SK-N-SH (cell line): ENCODE measurements at regions of chr2 and their contacts with region 1.

Region 1: GRCh38 chr2:23404426-23404825 is 19.4 kb downstream of the KLHL29 start:
- DNase-seq: peak; percentile 84
- H3K4me3 ChIP-seq: peak overlapping the region; percentile 19 to 30
- H3K27ac ChIP-seq: peak overlapping the region; percentile 67 to 87
- H3K4me1 ChIP-seq: peaks cover 15 to 23% of the 10 kb centered on the region in 2 experiments; a peak in 3 of 4 replicates
- H3K27me3 ChIP-seq: no peaks in the 10 kb centered on the region
- CTCF ChIP-seq: peak; percentile 63
- EP300 ChIP-seq: peak in 1 of 2 experiments; percentile 62; a peak in 1 of 4 replicates
- RAD21 ChIP-seq: peak; percentile 92

Region 2: GRCh38 chr2:23452853-23453420 is 48.5 kb after region 1 on chr2:
- CTCF ChIA-PET with region 1: interaction called, 20 read pairs
- POLR2A ChIA-PET with region 1: no interaction called
- DNase-seq: no peak
- H3K4me3 ChIP-seq: no peak overlapping the region
- H3K27ac ChIP-seq: no peak overlapping the region
- H3K4me1 ChIP-seq: peaks cover 11 to 38% of the 10 kb centered on the region in 2 experiments; a peak in 3 of 4 replicates
- H3K27me3 ChIP-seq: no peaks in the 10 kb centered on the region
- CTCF ChIP-seq: no peak
- EP300 ChIP-seq: no peak
- RAD21 ChIP-seq: no peak

Region 3: GRCh38 chr2:23465936-23466335 is 61.5 kb after region 1 on chr2:
- CTCF ChIA-PET with region 1: interaction called, 20 read pairs
- POLR2A ChIA-PET with region 1: no interaction called
- DNase-seq: no peak
- H3K4me3 ChIP-seq: no peak overlapping the region
- H3K27ac ChIP-seq: no peak overlapping the region
- H3K4me1 ChIP-seq: peaks cover 0 to 26% of the 10 kb centered on the region in 2 experiments; a peak in 2 of 4 replicates
- H3K27me3 ChIP-seq: no peaks in the 10 kb centered on the region
- CTCF ChIP-seq: no peak
- EP300 ChIP-seq: no peak
- RAD21 ChIP-seq: no peak

Region 4: DNA sequence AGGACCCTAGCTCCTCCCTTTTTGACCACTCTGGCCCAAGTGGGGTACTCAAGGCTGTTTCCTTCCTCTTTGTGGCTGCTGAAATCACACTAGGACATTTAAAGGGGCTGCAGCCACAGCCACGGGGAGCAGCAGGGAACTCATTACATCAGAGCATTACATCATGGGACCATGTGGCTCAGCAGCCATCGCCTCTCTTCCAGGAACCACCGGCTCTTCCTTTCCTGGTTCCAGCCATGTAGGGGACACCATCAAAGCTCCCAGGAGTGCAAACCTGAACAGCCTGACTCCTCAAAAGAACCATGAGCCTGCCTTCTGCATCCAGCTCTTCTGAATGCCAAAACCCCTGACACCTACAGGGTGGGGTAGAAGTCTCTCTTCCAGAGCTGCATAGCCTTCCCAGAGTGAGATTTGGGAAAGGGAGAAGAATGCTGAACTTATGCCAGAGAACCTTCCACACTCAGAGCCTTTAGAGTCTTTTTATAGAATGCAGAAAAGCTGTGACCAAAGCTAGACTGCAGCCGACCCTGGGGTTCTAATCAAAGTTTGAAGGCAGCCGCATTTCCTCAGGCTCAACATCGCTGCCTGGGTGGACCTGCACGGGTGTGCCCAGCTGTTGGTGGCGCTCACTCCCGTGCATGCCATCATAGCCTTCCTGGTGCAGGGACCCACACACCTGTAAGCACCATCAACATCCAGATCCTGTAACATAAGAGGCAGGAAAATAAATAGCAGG is 102.3 kb after region 1 on chr2:
- CTCF ChIA-PET with region 1: no interaction called
- POLR2A ChIA-PET with region 1: no interaction called
- DNase-seq: no peak
- H3K4me3 ChIP-seq: no peak overlapping the region
- H3K27ac ChIP-seq: no peak overlapping the region
- H3K4me1 ChIP-seq: peaks cover 0 to 68% of the 10 kb centered on the region in 2 experiments; a peak in 2 of 4 replicates
- H3K27me3 ChIP-seq: no peaks in the 10 kb centered on the region
- CTCF ChIP-seq: no peak
- EP300 ChIP-seq: no peak
- RAD21 ChIP-seq: no peak

Region 5: DNA sequence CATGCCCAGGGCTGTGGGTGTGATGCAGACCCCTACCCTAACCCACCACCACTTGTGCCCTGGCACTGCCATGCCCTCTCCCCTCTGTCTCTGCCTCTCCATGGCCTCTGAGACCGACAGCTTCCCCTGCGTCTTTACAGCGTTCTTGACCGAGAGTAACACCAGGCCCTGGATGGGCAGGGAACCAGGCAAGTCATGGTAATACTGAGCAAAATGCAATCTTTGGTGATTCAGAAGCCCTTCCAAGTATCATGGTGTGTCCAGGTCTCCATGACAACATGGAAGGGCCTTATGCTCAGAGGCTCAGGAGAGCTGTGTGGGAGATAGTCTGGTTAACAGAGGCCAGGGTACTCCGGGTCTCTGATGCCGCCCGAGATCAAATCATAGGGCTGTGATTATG is 156.7 kb after region 1 on chr2:
- CTCF ChIA-PET with region 1: interaction called, 15 read pairs
- POLR2A ChIA-PET with region 1: no interaction called
- DNase-seq: no peak
- H3K4me3 ChIP-seq: no peak overlapping the region
- H3K27ac ChIP-seq: no peak overlapping the region
- H3K4me1 ChIP-seq: peaks cover 0 to 45% of the 10 kb centered on the region in 2 experiments; a peak in 2 of 4 replicates
- H3K27me3 ChIP-seq: no peaks in the 10 kb centered on the region
- CTCF ChIP-seq: no peak
- EP300 ChIP-seq: no peak
- RAD21 ChIP-seq: no peak

Region 6: DNA sequence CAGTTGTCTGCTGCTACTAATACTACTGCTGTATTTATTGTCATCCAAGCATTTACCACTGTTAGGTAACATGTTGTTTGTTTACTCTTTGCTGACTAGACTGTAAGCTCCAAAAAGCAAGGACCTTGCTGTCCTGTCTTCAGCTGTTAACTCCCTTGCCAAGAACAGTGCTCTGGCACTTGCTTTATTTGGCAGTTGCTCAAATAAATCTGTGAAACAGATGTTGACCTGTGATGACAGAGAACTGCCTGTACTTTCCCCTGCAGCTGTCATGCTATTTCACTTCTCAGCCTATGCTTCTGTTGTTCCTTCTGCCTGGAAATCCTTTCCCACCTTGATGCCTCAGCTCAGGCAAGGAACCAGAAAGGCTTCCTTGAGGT is 341.3 kb after region 1 on chr2:
- CTCF ChIA-PET with region 1: interaction called, 19 read pairs
- POLR2A ChIA-PET with region 1: no interaction called
- DNase-seq: peak; percentile 65
- H3K4me3 ChIP-seq: no peak overlapping the region
- H3K27ac ChIP-seq: peak overlapping the region in 1 of 2 experiments; percentile 77; a peak in 2 of 4 replicates
- H3K4me1 ChIP-seq: peaks cover 0 to 17% of the 10 kb centered on the region in 2 experiments; a peak in 3 of 4 replicates
- H3K27me3 ChIP-seq: no peaks in the 10 kb centered on the region
- CTCF ChIP-seq: no peak
- EP300 ChIP-seq: peak in 1 of 2 experiments; percentile 43; a peak in 1 of 4 replicates
- RAD21 ChIP-seq: 0 out of 2 replicates have a peak, but pooled peaks have one; percentile 1